ENCODE measurements at regions of chr14 and their contacts with region 1.

Region 1: DNA sequence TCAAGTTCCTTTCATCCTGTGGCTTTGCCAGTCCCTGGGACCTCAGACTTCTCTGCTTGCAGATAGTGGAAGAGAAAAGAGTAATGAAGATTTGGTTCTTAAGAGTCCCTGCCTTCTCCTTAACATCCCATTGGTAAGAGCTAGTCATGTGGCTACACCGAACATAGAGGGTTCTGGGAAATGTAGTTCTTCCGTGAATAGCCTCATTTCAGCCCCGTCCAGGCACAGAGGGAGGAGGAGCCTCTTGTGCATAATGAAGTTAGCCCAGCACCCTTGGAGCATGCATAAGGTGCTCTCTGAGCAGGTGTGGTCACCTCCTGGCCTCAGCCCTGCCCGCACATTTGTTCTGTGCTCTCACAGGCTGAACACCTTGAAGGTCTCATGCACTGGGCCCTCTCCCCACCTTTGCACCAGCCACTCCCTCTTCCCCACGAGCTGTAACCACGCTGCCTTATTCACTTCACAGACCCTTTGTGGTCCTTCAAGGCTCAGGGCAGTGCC is 134.0 kb downstream of the BCL11B start:
- DNase-seq: peak in 1 of 2 donors; percentile 24
- H3K4me3 ChIP-seq: no peak overlapping the region
- H3K27ac ChIP-seq: no peak overlapping the region
- H3K4me1 ChIP-seq: no peaks in the 10 kb centered on the region
- H3K27me3 ChIP-seq: no peaks in the 10 kb centered on the region
- CTCF ChIP-seq: no peak
- POLR2A ChIP-seq: no peak

Region 2: DNA sequence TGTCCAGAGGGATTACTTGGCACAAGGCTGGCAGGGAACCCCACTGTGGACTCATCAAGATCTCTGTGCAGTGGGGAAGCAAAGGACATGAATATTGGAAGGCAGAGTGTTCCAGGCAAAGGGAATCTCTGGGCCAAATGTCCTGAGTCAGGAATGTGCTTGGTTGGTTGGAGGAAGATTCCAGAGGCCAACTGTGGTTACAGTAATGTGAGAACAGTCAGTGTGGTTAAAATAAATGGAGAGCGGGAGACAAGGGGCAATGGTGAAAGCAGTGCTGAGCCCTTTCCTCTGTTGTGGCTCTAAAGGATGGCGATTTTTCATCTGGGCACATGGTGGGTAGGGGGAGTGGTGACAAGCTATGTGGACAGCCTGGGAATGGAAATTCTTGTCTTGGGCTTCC is 814.2 kb before region 1 on chr14:
- intact Hi-C with region 1: loop called (anchors 5 kb)
- DNase-seq: no peak
- H3K4me3 ChIP-seq: no peak overlapping the region
- H3K27ac ChIP-seq: no peak overlapping the region
- H3K4me1 ChIP-seq: no peaks in the 10 kb centered on the region
- H3K27me3 ChIP-seq: no peaks in the 10 kb centered on the region
- CTCF ChIP-seq: no peak
- POLR2A ChIP-seq: no peak

Region 3: DNA sequence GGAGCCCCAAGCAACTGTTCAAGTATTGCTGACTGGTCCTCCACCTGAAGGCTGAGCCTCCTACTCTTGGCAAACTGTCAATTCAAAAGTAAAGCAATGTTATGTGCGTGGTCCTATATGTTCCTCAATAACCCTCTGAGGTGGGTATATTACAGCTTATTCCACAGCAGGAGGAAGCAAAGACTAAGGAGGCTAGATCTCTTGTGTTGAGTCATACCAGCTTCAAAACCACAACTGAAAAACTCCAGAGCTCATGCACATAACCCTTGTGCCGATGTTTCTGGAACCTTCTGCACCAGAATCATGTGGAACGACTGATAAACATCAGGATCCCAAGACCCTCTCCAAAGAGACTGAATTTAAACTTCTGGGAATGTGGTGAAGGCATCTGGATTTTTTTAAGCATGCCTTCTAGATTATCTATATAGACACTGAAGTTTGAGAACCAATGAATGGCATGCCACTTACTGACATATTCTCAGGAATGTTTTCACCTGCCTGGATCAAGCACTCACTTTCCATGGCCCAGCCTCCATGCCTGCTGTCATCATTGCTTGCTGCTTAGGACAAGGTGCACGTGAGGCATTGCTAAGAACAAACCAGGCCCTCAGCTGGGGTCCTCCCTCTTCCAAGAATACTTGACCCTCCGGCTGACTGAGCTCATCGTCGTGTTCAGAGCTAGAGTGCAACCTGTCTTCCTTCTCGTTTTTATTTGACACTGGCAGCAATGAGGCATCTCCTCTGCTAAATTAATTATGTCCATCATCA is 60.8 kb before region 1 on chr14:
- intact Hi-C with region 1: loop called (anchors 10 kb)
- DNase-seq: no peak
- H3K4me3 ChIP-seq: no peak overlapping the region
- H3K27ac ChIP-seq: no peak overlapping the region
- H3K4me1 ChIP-seq: no peaks in the 10 kb centered on the region
- H3K27me3 ChIP-seq: no peaks in the 10 kb centered on the region
- CTCF ChIP-seq: no peak
- POLR2A ChIP-seq: no peak

Region 4: DNA sequence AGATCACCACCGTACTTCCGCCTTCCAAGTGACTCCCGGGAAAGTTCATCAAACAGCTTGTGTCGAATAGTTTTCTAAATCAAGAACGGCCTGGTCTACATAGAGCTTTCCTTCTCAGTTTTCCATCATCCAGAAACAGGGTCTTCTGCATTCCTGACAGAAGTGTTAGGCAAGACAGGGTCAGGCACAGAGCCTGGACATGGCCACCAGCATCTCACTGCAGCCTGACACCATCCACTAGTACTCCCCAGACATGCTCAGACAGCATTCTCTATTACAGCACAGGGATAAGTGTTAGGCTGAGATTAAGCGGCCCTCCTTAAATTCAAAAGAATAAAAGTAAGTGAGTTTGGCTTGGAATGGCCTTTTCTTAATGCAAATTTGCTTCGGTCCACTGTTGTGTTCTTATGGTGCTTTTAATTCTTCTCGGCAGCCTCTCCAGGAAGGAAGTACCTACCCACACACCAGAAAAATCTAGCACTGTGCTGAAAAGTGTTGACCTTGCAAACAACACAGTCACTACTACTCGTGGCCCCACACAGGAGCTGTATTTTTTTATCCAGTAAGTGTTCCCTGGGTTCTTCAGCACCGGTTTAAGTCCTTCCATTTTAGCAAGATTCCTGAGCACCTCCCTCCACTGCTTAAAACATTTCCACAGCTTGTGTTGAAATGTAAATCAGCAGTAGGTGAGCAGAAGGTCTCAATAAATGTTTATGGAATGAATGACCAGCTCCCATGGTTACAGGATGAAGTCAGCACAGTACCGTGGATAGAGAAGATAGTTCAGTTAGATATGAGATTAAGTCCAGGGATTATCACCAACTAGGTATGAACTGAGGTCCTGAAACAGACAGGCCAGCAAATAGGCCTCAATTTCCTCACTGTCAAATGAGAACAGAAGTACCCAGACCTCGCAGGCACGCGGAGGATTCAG is 298.5 kb after region 1 on chr14:
- intact Hi-C with region 1: loop called (anchors 5 kb)
- DNase-seq: no peak
- H3K4me3 ChIP-seq: no peak overlapping the region
- H3K27ac ChIP-seq: no peak overlapping the region
- H3K4me1 ChIP-seq: no peaks in the 10 kb centered on the region
- H3K27me3 ChIP-seq: no peaks in the 10 kb centered on the region
- CTCF ChIP-seq: no peak
- POLR2A ChIP-seq: no peak

Region 5: DNA sequence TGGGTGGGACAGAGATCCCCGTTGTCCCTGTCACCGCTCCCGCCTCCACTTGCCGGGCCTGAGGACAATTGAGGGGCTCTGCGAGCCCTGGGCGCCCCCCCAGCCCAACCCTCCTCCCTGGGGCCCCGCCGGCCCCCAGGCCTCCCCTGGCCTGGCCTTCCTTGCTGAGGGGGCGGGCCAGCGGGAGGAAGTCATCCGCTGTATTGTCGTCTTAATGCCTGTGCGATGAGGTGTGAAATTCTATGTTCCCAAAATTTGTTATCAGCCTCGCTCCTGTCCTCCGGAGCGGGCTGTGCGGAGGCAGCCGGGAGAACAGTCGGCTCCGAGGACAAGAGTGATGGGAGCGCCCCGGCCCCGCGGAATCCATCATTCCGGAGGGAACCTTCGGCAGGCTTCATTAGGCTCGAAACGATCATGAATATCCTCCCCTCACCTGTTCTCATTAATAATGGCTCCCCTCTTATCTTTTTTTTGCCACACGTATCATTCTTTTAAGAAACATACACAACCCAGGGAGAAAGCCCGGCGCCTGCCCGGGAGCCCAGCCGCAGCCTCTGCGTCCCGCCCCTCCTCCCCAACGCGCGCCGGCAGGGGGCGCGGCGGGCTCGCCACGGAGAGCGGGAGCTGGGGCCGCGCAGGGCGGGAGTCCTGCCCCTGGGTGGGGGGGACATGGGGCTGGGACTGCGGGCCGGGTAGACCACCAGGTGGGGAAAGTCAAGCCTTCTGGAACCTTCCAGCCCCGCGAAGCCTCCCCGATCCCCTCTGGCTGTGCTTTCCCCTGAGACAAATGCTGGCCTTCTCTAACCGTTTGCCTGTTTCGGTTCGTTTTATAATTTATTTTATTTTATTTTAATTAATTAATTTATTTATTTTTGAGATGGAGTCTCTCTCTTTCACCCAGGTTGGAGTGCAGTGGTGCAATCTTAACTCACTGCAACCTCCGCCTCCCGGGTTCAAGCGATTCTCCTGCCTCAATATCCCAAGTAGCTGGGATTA is 1571.5 kb after region 1 on chr14:
- intact Hi-C with region 1: no loop called
- DNase-seq: peak in 1 of 2 donors; percentile 22
- H3K4me3 ChIP-seq: peak overlapping the region; percentile 7 to 52 (median 28)
- H3K27ac ChIP-seq: no peak overlapping the region
- H3K4me1 ChIP-seq: peaks cover 0 to 3% of the 10 kb centered on the region in 2 donors
- H3K27me3 ChIP-seq: peaks cover 0 to 20% of the 10 kb centered on the region in 2 donors
- CTCF ChIP-seq: peak in 2 of 3 donors; percentile 14 to 21
- POLR2A ChIP-seq: no peak

Measured in breast epithelium (tissue), 4 donors.